H1 (cell line): ENCODE measurements at regions of chr9 and their contacts with region 1.

Region 1: GRCh38 chr9:114291064-114291474 is 31.8 kb upstream of the ORM1 start:
- DNase-seq: peak; percentile 62 to 97
- H3K4me3 ChIP-seq: no peak overlapping the region
- H3K27ac ChIP-seq: no peak overlapping the region
- H3K4me1 ChIP-seq: peaks cover 0 to 13% (median 2%) of the 10 kb centered on the region in 4 experiments; a peak in 5 of 7 replicates
- H3K27me3 ChIP-seq: no peaks in the 10 kb centered on the region
- CTCF ChIP-seq: peak in 2 of 3 experiments; percentile 85 to 92; a peak in 3 of 4 replicates
- EP300 ChIP-seq: no peak
- POLR2A ChIP-seq: no peak
- RAD21 ChIP-seq: peak; percentile 92 to 94

Region 2: DNA sequence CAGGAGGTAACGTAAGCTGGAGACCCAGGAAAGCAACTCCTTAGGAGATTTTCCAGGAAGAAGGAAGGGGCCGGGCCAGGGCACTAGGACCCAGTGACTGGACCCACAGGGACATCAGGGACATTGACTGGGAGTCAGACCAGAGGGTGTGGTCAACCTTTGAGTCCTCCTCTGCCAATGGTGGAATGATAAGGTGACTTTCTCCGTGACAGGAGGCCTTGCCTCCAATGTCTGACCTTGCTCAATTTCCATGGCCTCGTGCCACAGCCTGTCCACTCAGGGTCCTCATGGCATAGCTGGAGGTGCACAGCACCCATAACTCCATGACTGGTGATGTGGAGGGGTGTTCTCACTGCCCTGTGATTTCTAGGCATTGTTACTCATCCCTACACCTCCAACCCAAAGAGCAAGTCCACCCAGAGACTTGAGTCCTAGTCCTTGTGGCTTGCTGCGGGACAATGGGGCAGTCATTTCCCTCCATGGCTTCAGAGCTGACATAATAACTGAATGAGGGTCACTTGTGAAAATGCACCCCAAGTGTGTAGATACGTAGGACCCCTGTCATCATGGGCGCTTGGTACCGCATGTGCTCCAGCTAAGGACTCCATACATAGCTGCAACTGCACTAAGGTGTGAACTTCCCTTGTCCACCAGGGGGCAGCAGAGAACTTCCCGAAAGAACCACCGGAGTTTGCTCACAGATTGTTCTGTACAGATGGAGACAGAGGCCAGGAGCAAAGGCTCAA is 208.9 kb before region 1 on chr9:
- CTCF ChIA-PET with region 1: interaction called, 100 read pairs
- POLR2A ChIA-PET with region 1: no interaction called
- DNase-seq: peak in 1 of 2 experiments; percentile 97
- H3K4me3 ChIP-seq: no peak overlapping the region
- H3K27ac ChIP-seq: no peak overlapping the region
- H3K4me1 ChIP-seq: peaks cover 0 to 6% (median 3%) of the 10 kb centered on the region in 4 experiments; a peak in 4 of 7 replicates
- H3K27me3 ChIP-seq: peaks cover 0 to 3% (median under 1%) of the 10 kb centered on the region in 4 experiments; a peak in 3 of 7 replicates
- CTCF ChIP-seq: peak; percentile 83 to 96 (median 94)
- EP300 ChIP-seq: no peak
- POLR2A ChIP-seq: no peak
- RAD21 ChIP-seq: peak; percentile 94

Region 3: GRCh38 chr9:114117996-114118830 is 172.9 kb before region 1 on chr9:
- CTCF ChIA-PET with region 1: interaction called, 205 read pairs
- POLR2A ChIA-PET with region 1: interaction called, 3 read pairs
- DNase-seq: no peak
- H3K4me3 ChIP-seq: no peak overlapping the region
- H3K27ac ChIP-seq: no peak overlapping the region
- H3K4me1 ChIP-seq: peaks cover 0 to 4% (median 1%) of the 10 kb centered on the region in 4 experiments; a peak in 3 of 7 replicates
- H3K27me3 ChIP-seq: peaks cover 0 to 2% (median 1%) of the 10 kb centered on the region in 4 experiments; a peak in 2 of 7 replicates
- CTCF ChIP-seq: no peak
- EP300 ChIP-seq: no peak
- POLR2A ChIP-seq: no peak
- RAD21 ChIP-seq: no peak

Region 4: DNA sequence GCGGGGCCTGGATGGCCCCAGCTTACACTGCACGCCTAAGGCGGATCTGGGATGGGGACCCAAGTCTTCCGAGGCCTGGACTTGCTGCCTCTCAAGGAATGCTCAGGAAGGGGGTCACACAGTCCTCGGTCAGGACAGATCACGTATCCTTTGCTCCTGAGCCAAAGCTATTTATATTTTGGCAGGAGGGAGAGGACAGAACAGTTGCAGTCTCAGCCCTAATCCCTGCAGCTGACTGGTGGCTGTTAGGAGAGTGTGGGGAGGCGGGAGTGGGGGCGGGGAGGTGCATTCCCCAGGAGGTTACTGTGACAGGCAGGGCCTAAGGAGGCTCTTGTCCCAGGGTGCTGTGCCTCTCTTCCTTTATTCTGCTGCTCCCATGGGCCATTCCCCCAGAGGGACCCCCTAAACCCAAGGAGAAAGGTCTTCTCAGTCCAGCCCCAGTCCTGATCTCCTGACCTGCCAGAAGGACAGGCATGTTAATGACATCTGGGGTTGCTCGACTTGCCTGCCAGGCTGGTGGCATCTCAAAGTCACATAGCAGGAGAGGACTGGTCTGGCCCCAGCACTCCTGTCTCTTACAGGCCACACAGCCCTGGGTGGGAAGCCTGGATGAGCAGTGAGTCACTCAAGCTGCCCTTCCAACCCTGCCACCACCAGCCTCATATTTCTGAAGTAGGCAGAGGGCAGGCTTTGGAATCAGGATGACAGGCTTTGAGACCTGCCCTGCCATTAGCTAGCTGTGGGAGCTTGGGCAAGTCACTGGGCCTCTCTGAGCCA is 83.8 kb before region 1 on chr9:
- CTCF ChIA-PET with region 1: interaction called, 12 read pairs
- POLR2A ChIA-PET with region 1: no interaction called
- DNase-seq: no peak
- H3K4me3 ChIP-seq: no peak overlapping the region
- H3K27ac ChIP-seq: no peak overlapping the region
- H3K4me1 ChIP-seq: peaks cover 0 to 24% (median 6%) of the 10 kb centered on the region in 4 experiments; a peak in 6 of 7 replicates
- H3K27me3 ChIP-seq: no peaks in the 10 kb centered on the region
- CTCF ChIP-seq: no peak
- EP300 ChIP-seq: no peak
- POLR2A ChIP-seq: no peak
- RAD21 ChIP-seq: no peak

Region 5: DNA sequence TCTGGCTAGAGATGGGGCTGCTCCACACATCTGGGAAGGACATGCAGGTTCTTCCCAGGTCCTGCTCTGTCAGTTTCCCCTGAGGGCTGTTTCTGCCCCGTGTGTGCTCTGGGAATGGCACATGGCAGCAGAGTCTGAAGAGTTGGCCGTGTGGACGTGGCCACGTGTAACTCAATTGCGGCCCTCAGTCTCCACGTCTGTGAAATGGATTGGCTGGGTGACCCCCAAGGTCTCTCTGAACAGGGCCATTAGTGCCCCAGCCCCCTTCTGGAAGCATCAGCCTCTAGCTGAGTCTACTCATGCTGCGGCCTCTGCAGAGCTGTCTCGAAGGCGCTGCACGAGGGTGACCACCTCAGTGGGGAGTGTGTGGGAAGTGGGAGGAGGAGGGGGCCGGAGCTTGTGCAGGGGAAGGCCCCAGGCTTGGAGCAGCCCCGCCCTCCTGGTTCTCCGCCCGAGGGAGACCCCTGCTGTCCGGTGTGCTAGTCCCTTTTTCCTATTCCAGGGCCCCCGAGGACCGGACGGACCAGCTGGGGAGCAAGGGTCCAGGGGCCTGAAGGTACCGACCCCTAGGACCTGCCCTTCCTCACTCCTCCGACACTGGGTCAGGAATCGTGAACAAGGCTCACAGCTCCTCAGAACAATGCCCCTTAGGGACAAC is 27.1 kb before region 1 on chr9:
- CTCF ChIA-PET with region 1: interaction called, 20 read pairs
- POLR2A ChIA-PET with region 1: no interaction called
- DNase-seq: peak in 1 of 2 experiments; percentile 79
- H3K4me3 ChIP-seq: no peak overlapping the region
- H3K27ac ChIP-seq: no peak overlapping the region
- H3K4me1 ChIP-seq: peaks cover 0 to 3% (median 0%) of the 10 kb centered on the region in 4 experiments; a peak in 2 of 7 replicates
- H3K27me3 ChIP-seq: no peaks in the 10 kb centered on the region
- CTCF ChIP-seq: peak; percentile 26 to 45 (median 33); a peak in 3 of 4 replicates
- EP300 ChIP-seq: no peak
- POLR2A ChIP-seq: no peak
- RAD21 ChIP-seq: peak; percentile 54 to 57

Region 6: DNA sequence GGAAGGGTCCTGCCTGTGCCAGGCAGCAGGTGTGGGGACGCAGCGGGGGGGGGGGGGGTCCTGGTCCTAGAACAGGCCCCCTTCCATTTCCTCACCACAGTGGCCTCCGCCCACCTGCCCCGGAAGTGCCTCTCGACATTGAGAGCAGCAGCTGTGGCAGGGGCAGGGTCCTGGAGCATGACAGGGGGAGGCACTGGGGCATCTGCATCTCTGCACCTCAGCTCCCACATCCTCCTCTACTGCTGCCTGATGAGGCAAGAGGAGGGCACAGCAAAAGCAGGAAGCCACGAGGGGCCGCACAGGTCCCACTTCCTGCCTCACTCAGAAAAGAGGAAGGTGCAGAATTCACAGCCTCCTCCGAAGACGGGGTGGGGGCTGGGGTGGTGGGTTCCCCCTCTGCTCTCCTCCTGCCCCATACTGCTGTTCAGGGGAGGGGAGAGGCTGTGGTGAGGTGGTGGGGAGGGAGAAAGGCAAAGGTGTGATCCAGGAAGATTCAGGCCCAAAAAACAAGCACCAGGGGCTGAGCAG is 81.9 kb after region 1 on chr9:
- CTCF ChIA-PET with region 1: no interaction called
- POLR2A ChIA-PET with region 1: no interaction called
- DNase-seq: no peak
- H3K4me3 ChIP-seq: no peak overlapping the region
- H3K27ac ChIP-seq: no peak overlapping the region
- H3K4me1 ChIP-seq: peaks cover 7 to 30% (median 22%) of the 10 kb centered on the region in 4 experiments
- H3K27me3 ChIP-seq: no peaks in the 10 kb centered on the region
- CTCF ChIP-seq: no peak
- EP300 ChIP-seq: no peak
- POLR2A ChIP-seq: no peak
- RAD21 ChIP-seq: no peak